Activated naive CD4-positive, alpha-beta T cell treated with anti-CD3 and anti-CD28 coated beads for 36 hours (primary cell): ENCODE measurements at regions of chr18 and their contacts with region 1.

Region 1: DNA sequence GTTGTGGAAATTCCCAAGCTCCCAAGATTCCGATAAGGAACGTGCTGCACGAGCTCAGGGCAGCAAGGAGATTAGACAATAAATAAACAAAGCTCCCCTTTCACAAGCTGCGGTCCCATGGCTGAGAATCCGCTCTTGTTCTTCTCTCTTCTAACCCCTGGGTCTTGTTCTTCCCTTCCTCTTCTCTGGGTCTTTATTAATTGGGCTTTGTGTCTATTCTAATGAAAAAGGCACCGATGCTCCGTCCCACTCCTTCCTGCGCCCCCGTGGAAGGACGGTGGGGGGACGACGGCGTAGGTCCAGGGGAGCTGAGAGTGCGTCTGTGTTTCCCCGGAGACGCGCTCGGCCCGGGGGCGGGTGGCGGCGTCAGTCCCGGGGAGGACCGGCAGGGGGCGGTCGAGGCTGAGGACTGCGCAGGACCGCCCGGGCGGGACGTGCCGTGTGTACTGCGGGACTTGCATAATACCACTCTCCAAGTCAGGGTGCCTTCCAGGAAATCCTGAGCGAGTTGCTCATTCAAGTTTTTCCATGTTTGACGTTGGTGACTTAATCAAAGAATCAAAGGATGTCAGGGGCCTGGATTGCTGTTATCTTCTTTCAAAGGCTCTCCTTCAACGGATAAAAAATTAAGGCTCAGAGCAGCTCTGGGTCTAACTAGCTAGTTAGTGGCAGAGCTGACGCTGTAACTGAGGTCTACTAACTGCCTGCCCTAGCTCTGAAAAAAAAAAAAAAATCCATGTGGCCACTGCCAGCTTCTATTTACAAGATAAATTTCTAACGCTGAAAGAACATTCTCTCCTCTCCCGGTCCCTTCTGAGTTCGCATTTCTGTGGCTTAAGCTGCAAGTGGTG is 321.4 kb downstream of the TGIF1 start:
- DNase-seq: peak; percentile 88
- H3K4me3 Mint-ChIP-seq: peak overlapping the region; percentile 55
- H3K27ac Mint-ChIP-seq: no peak overlapping the region
- H3K4me1 Mint-ChIP-seq: peaks cover 6% of the 10 kb centered on the region
- H3K27me3 Mint-ChIP-seq: peaks cover 28% of the 10 kb centered on the region

Region 2: GRCh38 chr18:3577281-3577855 is 194.0 kb before region 1 on chr18:
- CTCF ChIA-PET with region 1: no interaction called
- intact Hi-C with region 1: no loop called
- DNase-seq: no peak
- H3K4me3 Mint-ChIP-seq: no peak overlapping the region
- H3K27ac Mint-ChIP-seq: no peak overlapping the region
- H3K4me1 Mint-ChIP-seq: peaks cover 2% of the 10 kb centered on the region
- H3K27me3 Mint-ChIP-seq: no peaks in the 10 kb centered on the region

Region 3: DNA sequence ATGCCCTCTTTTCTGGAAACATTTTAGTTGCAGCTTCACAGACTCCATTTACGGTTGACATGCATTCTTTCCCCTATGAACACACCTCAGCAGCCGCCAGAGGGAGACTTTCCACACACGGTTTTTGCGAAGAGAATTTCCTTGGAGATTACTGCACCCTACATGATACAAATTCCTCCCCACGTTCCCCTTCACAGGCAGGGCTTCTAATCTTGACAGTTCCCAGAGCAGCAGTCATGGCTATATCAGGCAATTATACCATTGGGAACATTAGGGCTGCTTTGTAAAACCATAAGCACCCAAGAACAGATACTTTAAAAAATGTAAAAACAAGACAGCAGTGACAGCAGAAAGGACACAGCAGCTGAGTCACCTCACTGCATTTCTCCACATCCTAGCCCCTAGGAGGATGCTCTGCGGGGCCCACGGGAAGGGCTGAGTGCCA is 67.6 kb before region 1 on chr18:
- CTCF ChIA-PET with region 1: interaction called, 10 read pairs
- intact Hi-C with region 1: no loop called
- DNase-seq: peak; percentile 57
- H3K4me3 Mint-ChIP-seq: no peak overlapping the region
- H3K27ac Mint-ChIP-seq: no peak overlapping the region
- H3K4me1 Mint-ChIP-seq: peaks cover 3% of the 10 kb centered on the region
- H3K27me3 Mint-ChIP-seq: peaks cover 32% of the 10 kb centered on the region

Region 4: DNA sequence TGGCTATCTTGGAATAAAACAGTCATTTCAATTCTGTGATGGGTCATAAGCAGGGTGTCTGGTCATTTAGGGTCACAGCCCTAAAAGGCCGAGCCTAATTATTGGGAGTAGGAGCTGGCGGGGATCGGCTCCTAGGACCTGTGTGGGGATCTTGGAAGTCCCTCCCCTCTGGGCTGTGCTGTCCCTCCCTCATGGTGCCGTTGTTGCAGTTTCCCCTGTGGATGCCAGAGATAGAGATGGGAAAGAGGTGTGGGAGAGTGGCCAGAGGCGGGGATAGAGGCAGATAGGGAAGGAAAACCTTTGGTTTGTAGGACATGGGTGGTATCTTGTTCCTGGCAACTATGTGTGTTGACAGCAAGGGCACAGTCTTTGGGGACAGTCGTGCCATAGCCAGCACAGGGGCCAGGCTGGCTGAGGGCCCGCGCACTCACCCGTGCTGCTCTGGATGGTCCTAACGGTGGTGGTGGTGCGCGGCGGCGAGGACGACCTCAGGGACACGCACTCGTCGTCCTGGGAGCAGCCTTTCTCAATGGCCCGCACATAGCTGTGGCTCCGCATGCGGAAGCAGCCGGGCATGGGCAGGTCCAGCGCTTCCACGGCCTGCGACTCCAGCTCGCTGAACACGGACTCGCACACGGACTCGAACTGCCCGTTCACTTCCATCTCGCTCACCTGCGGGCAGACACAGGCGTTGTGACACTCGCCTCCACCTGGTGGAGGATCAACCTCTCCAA is 42.5 kb before region 1 on chr18:
- CTCF ChIA-PET with region 1: no interaction called
- intact Hi-C with region 1: no loop called
- DNase-seq: no peak
- H3K4me3 Mint-ChIP-seq: no peak overlapping the region
- H3K27ac Mint-ChIP-seq: no peak overlapping the region
- H3K4me1 Mint-ChIP-seq: no peaks in the 10 kb centered on the region
- H3K27me3 Mint-ChIP-seq: peaks cover 23% of the 10 kb centered on the region

Region 5: GRCh38 chr18:3782901-3783300 is 11.6 kb after region 1 on chr18:
- CTCF ChIA-PET with region 1: interaction called, 20 read pairs
- intact Hi-C with region 1: no loop called
- DNase-seq: no peak
- H3K4me3 Mint-ChIP-seq: no peak overlapping the region
- H3K27ac Mint-ChIP-seq: no peak overlapping the region
- H3K4me1 Mint-ChIP-seq: no peaks in the 10 kb centered on the region
- H3K27me3 Mint-ChIP-seq: peaks cover 4% of the 10 kb centered on the region

Region 6: GRCh38 chr18:3983351-3983969 is 212.1 kb after region 1 on chr18:
- CTCF ChIA-PET with region 1: interaction called, 13 read pairs
- intact Hi-C with region 1: no loop called
- DNase-seq: no peak
- H3K4me3 Mint-ChIP-seq: no peak overlapping the region
- H3K27ac Mint-ChIP-seq: no peak overlapping the region
- H3K4me1 Mint-ChIP-seq: peaks cover 17% of the 10 kb centered on the region
- H3K27me3 Mint-ChIP-seq: no peaks in the 10 kb centered on the region

Region 7: GRCh38 chr18:5057386-5058348 is 1286.3 kb after region 1 on chr18:
- CTCF ChIA-PET with region 1: no interaction called
- intact Hi-C with region 1: loop called (anchors 1 kb)
- DNase-seq: peak; percentile 71
- H3K4me3 Mint-ChIP-seq: no peak overlapping the region
- H3K27ac Mint-ChIP-seq: no peak overlapping the region
- H3K4me1 Mint-ChIP-seq: peaks cover 20% of the 10 kb centered on the region
- H3K27me3 Mint-ChIP-seq: peaks cover 5% of the 10 kb centered on the region